ENCODE measurements at regions of chr12 and their contacts with region 1.

Region 1: DNA sequence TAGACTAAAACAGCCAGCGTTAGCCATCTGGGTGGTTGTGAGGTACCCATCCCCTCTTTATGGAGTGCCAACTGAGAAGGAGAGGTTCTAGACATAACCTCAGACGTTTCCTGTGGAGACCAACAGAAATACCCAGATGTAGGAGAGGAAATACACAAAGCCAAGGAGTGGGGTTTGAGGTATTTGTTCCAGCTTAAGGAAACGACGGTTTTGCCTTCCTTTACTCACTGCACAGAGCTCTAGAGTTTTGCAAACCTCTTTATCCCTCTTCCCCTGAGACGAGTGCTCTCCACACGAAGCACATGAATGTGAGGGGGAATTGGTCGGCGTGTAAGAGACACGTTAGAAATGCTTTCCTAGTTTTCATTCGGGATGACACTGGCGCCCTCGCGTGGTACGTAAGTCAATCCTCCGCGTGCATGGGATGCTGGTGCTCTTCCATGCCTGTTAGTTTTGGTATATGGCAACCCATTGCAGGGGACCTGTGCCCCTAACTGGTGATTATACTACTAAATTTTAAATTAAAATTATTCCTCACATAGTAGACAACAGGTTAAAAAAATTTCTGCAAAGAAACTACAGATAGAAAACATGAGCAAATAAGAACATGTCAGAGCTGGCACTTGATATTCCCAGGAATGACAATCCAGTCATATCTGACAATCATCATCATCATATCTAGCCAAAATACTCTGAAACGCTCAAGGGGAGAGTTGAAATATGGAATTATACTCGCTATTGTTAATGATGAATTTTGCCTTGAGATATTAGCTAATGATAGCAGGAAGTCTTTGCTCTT is 121.7 kb downstream of the PPM1H start:
- DNase-seq: peak; percentile 68
- ATAC-seq: peak; percentile 65
- H3K4me3 Mint-ChIP-seq: peak overlapping the region; percentile 43
- H3K27ac Mint-ChIP-seq: peak overlapping the region; percentile 6
- H3K4me1 Mint-ChIP-seq: peaks cover 19% of the 10 kb centered on the region
- H3K27me3 Mint-ChIP-seq: peaks cover 5% of the 10 kb centered on the region

Region 2: DNA sequence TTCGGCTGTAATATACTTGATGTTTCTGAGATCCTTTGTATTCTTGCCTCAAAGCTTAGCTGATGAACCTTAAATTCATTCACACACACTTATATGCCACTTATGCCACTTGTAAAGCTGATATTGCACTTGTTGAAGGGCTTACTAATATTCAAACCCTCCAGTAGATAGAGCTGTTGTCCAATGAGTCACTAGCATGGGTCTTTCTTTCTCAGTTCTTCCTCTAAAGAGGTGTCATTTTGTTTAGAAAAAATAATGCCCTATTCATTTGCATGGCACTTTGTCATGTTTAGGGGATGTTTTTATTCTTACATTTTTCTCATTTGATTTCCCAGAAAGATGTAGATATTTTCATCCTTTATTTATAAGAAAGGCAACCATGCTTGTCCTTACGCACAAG is 290.2 kb before region 1 on chr12:
- CTCF ChIA-PET with region 1: interaction called, 3 read pairs
- POLR2A ChIA-PET with region 1: no interaction called
- intact Hi-C with region 1: loop called in 1 of 2 experiments (anchors 2 kb)
- DNase-seq: no peak
- ATAC-seq: peak; percentile 91
- H3K4me3 Mint-ChIP-seq: no peak overlapping the region
- H3K27ac Mint-ChIP-seq: no peak overlapping the region
- H3K4me1 Mint-ChIP-seq: peaks cover 49% of the 10 kb centered on the region
- H3K27me3 Mint-ChIP-seq: no peaks in the 10 kb centered on the region

Region 3: DNA sequence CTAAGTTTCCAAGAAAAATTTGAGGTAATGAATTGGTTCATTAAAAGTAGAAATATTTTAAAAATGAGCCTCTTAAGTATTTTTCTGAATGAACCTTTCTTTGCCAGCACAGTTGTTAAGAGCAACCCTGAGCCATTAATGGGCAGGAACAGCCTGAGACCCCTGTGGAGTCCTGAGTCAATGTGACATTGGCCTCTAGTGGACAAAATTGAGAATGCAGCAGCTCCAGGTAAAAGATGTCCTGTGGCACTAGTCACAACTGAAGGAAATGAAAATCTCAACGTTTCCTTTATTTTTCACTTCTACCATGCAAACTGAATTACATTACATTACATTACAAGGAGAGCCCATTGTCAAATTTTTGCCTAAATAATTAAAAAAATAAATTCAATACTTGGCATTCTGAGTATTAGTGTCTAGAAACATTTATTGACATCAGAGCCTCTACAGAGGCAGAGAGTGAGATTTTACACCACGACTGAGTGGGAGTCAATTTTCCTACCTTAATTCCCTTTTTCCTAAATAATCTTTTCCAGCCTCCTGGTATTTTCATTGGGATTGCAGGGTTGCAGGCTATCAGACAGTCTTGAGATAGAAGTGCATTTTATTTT is 14.0 kb before region 1 on chr12:
- CTCF ChIA-PET with region 1: interaction called, 40 read pairs
- POLR2A ChIA-PET with region 1: no interaction called
- intact Hi-C with region 1: no loop called
- DNase-seq: peak; percentile 69
- ATAC-seq: peak; percentile 80
- H3K4me3 Mint-ChIP-seq: no peak overlapping the region
- H3K27ac Mint-ChIP-seq: no peak overlapping the region
- H3K4me1 Mint-ChIP-seq: no peaks in the 10 kb centered on the region
- H3K27me3 Mint-ChIP-seq: no peaks in the 10 kb centered on the region

Region 4: DNA sequence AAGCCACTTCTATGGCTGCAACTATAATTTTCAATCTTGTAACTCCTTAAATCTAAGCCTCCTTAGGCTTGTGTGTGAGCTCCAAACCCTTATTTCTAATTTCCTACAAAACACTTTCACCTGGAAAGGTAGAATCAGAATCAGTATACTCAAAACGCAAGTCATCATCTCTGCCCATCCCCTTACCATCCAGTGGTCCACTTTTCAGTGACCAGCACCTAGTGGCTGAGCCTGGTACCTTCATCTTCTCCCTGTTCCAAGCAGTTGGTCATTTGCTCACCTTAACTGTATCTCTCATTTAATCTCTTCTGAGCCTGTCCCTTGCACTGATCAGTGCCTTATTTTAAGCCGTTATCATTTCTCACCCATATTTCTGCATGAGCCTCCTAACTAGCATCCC is 13.8 kb after region 1 on chr12:
- CTCF ChIA-PET with region 1: no interaction called
- POLR2A ChIA-PET with region 1: no interaction called
- intact Hi-C with region 1: no loop called
- DNase-seq: no peak
- ATAC-seq: no peak
- H3K4me3 Mint-ChIP-seq: no peak overlapping the region
- H3K27ac Mint-ChIP-seq: no peak overlapping the region
- H3K4me1 Mint-ChIP-seq: no peaks in the 10 kb centered on the region
- H3K27me3 Mint-ChIP-seq: peaks cover 9% of the 10 kb centered on the region

Region 5: DNA sequence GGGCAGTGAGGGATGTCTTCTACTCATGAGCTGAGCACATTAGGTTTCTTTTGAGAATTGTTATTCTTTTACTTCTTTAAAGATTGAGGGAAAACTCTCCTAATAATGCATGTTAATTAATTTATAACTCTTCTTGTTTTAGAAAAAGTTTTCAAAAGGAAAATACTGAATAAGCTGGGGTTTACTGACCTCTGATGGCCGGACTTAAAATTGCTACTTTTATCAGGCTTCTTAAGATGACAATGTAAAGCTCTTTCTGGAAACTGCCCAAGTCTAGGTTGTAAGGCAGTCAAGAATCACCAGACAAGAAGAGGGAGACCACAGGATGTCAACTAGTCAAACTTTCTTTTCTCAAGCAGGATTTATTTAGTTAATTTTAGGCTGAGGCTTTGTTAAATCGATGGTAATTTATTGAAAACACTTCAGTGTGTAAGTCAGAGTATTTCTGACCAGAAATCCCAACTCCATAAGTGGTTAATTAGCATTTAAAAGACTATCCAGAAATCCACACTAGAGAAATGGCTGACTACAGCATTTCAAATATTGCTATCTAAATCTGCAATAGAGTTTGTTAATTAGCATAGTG is 255.7 kb after region 1 on chr12:
- CTCF ChIA-PET with region 1: interaction called, 6 read pairs
- POLR2A ChIA-PET with region 1: no interaction called
- intact Hi-C with region 1: loop called in 1 of 2 experiments (anchors 5 kb)
- DNase-seq: no peak
- ATAC-seq: no peak
- H3K4me3 Mint-ChIP-seq: no peak overlapping the region
- H3K27ac Mint-ChIP-seq: no peak overlapping the region
- H3K4me1 Mint-ChIP-seq: no peaks in the 10 kb centered on the region
- H3K27me3 Mint-ChIP-seq: no peaks in the 10 kb centered on the region